Posterior cingulate gyrus (tissue), 11 donors: ENCODE measurements at regions of chr10 and their contacts with region 1.

Region 1: DNA sequence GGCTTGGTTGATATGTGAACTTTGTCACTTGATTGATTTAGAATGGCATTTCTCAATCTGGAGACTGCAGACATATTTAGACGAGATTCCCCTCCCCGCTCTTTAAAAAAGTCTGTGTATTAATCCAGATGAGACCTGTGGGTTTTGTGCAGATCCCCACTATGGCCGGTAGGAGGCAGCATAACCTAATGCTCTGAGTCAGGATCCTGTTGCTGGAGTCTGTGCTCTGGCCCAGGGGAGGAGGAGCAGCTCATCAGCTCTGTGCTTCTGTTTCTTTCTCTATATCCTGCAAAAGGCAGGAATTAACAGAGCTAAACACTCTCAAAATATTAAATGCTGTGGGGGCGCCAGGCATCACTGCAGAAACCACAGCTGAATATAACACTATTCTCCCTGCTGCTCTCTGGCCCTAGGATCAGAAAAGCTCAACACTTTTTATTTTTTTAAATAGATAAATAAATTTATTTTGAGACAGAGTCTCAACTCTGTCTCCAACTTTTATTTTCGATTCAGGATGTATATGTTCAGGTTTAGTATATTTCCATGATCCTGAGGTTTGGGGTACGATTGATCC is 23.9 kb upstream of the SEPHS1 start:
- DNase-seq: peak; percentile 45 to 94 (median 68)

Region 2: DNA sequence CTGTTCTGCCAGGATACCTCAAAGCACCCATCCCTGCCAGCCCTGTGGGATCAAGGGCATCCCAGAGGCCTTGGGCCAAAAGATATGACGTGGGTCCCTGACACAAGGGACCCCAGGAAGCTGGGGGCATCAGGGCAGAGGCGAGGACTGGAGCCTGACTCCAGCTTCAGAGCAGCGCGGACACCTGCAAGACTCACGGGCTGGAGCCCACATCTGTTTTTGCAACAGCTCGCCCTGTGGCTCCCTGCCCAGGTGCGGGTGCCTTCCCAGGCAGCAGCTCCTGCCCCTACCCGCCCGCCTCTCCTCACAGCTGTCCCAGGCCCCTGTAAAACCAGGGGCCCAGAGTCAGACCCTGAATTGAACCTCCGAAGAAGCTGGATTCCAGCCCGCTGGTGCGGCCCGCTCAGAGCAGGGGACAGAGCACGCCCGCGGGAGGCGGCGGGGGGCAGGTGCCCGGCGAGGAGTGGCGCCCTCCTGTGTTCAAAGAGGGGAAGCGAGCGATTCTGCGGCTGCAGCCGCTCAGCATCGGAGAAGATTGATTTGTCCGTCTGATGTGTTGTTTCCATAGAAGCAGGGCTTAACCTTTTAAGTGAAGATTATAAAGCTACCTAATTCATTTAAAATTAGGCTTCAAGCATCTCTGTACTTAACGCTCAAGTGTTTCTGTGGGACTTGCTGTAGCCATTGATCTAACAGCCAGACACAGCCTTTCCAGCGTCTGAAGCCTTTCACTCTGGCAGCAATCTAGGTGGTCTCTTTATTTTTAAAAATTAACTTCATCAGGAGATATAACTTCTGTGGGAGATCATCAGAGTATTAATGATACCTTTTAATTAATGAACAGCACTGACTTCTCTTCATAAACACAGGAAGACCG is 68.4 kb after region 1 on chr10:
- intact Hi-C with region 1: loop called (anchors 1 kb)
- DNase-seq: peak in 9 of 10 donors; percentile 35 to 92 (median 59)

Region 3: DNA sequence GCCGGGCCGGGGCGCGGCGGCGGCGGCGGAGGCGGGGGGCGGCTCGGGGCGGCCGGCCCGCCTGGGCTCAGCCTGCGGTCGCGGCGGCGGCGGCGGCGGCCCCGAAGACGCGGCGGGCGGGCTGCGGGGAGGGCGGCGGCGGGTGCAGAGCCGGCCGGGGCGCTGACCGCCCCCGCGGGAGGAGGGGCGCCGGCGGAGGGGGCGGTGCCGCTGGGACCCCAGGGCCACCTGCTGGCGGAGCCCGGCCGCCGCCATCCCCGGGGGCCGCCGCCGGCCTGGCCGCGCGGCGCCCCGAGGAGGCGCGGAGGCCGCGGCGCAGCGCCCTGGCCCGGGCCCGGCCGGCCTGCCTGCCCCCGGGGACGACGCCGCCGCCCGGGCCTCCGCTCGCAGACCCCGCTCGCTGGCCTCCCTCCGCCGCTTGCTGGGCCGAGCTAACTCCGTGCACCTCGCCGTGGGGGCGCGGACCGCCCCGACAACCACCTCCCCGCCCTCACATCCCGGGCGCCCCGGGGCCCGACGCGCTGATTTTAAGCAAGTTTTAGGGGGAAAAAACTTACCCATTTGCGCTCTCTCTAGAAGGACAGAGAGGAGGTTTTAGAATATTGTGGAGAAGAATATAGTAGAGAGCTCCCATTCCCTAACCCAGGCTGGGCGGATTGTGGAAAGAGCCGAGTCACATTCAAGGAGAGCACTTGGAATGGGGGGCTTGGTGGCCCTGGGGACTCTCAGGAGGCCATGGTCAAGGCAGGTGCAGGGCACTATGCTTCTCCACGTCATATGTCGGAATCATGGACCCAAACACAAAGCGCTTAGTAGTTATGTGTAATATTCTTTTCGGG is 157.1 kb after region 1 on chr10 and contains the start of gene BEND7:
- intact Hi-C with region 1: loop called (anchors 5 kb)
- DNase-seq: peak in 1 of 10 donors; percentile 24

Region 4: GRCh38 chr10:13586676-13587355 is 214.8 kb after region 1 on chr10 and contains the start of gene PRPF18:
- intact Hi-C with region 1: loop called (anchors 2 kb)
- DNase-seq: peak; percentile 91 to 99 (median 95)